ENCODE measurements at regions of chr5 and their contacts with region 1.

Region 1: GRCh38 chr5:40688127-40688761 is 8.5 kb downstream of the PTGER4 start:
- DNase-seq: peak; percentile 91
- H3K4me3 ChIP-seq: no peak overlapping the region
- H3K27ac ChIP-seq: peak overlapping the region; percentile 18
- H3K4me1 ChIP-seq: peaks cover 6% of the 10 kb centered on the region
- H3K27me3 ChIP-seq: no peaks in the 10 kb centered on the region
- CTCF ChIP-seq: peak; percentile 74

Region 2: DNA sequence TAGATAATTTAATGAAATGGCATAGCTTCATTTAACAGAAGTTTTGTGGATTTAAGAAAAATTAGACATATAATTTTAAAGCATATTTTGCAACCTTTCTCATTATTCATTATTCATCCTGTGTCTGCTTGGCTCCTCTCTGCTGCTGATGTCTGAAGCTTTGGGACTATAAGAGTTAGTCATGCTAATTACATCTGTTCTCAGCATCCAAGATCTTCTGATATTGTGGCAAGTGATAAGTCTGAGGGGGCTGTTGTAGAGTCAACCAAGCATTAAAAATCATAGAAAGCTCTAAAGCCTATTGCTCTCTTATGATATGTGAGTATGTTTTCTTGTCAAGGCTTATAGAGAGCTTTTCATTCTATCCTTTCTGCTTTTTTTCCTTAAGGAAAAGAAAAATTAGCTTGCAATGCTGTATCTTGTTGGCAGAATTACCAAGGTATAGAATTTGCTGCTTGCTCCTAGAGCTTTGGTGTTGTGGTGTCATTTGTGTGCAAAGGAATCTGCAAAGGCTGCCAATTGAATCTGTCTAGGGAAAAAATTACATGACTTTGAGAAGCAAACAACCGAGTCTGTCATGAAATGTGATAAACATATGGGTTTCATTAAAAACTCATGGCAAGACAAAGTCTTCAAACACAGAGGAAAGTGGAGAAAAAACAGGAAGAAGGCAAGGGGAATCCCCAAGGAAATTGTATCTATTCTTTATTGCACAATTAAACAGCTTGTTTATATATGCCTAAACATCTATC is 1107.4 kb before region 1 on chr5:
- intact Hi-C with region 1: loop called (anchors 5 kb)
- DNase-seq: no peak
- H3K4me3 ChIP-seq: no peak overlapping the region
- H3K27ac ChIP-seq: no peak overlapping the region
- H3K4me1 ChIP-seq: peaks cover 4% of the 10 kb centered on the region
- H3K27me3 ChIP-seq: no peaks in the 10 kb centered on the region
- CTCF ChIP-seq: no peak

Region 3: GRCh38 chr5:40021007-40021406 is 667.2 kb before region 1 on chr5:
- intact Hi-C with region 1: loop called (anchors 10 kb)
- DNase-seq: no peak
- H3K4me3 ChIP-seq: no peak overlapping the region
- H3K27ac ChIP-seq: no peak overlapping the region
- H3K4me1 ChIP-seq: no peaks in the 10 kb centered on the region
- H3K27me3 ChIP-seq: no peaks in the 10 kb centered on the region
- CTCF ChIP-seq: no peak